ENCODE measurements at regions of chr4 and their contacts with region 1.

Region 1: GRCh38 chr4:10157478-10158332 is 41.1 kb upstream of the WDR1 start:
- DNase-seq: peak; percentile 51
- H3K4me3 Mint-ChIP-seq: no peak overlapping the region
- H3K27ac Mint-ChIP-seq: no peak overlapping the region
- H3K4me1 Mint-ChIP-seq: peaks cover 45% of the 10 kb centered on the region
- H3K27me3 Mint-ChIP-seq: peaks cover 13% of the 10 kb centered on the region

Region 2: GRCh38 chr4:10121568-10122208 is 36.0 kb before region 1 on chr4:
- CTCF ChIA-PET with region 1: interaction called, 14 read pairs
- DNase-seq: no peak
- H3K4me3 Mint-ChIP-seq: no peak overlapping the region
- H3K27ac Mint-ChIP-seq: no peak overlapping the region
- H3K4me1 Mint-ChIP-seq: peaks cover 60% of the 10 kb centered on the region
- H3K27me3 Mint-ChIP-seq: no peaks in the 10 kb centered on the region

Region 3: DNA sequence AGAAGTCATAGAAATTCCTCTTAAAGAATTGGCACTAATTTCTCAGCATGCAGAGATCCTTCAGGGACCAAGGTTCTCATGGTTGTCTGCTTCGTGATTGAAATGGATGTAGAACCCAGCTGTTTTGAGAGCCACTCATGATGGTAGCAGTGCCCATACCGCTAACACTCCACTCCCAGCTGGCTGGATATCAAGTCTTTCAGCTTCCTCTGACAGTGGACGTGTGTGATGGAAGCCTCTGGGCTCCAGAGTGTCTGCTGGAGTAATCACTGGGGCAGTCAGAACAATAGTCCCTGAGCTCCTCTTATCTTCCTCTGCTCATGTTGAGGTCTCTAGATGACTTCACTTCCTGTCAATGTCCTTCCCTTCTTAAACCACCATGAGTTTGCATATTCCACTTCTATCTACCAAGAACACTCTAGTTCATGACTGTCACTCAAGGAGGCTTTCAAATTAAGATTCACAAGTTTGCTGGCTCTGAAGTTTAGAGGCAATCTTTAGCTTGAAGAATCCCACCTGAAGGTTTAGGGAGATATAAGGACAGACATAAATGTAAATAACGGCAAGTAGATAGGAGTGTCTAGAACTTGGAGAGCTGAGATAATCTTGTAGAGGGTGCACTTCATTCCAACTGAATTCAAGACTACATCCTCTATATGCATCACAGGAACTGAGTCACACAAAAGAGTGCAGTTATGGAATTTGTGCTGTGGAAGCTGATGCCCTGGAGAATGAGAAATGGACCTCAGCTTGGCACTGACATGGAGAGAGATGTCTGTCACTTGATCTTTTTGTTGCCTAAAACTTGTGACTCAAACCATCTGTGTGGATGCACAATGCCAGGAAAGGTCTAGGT is 23.4 kb after region 1 on chr4:
- CTCF ChIA-PET with region 1: interaction called, 32 read pairs
- DNase-seq: peak; percentile 46
- H3K4me3 Mint-ChIP-seq: no peak overlapping the region
- H3K27ac Mint-ChIP-seq: peak overlapping the region; percentile 87
- H3K4me1 Mint-ChIP-seq: peaks cover 47% of the 10 kb centered on the region
- H3K27me3 Mint-ChIP-seq: peaks cover 7% of the 10 kb centered on the region

Region 4: DNA sequence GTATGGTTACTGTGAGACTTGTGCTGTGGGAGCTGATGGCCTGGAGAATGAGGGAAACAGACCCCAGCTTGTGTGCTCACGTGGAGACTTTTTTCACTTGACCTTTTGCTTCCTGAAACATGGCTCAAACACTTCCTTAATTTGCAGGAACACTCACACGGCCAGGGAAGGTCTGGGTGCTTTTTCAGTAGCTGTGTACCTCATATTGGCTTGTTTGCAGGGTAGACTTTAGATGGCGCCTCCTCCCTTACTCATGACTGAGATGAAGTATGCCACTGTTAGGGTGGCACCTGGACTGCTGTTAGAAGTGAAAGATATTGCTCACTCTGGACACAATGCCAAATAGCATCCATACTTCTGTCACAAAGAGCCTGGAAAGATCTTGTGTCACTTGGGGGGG is 34.6 kb after region 1 on chr4:
- CTCF ChIA-PET with region 1: interaction called, 17 read pairs
- DNase-seq: no peak
- H3K4me3 Mint-ChIP-seq: no peak overlapping the region
- H3K27ac Mint-ChIP-seq: no peak overlapping the region
- H3K4me1 Mint-ChIP-seq: no peaks in the 10 kb centered on the region
- H3K27me3 Mint-ChIP-seq: peaks cover 3% of the 10 kb centered on the region

Region 5: DNA sequence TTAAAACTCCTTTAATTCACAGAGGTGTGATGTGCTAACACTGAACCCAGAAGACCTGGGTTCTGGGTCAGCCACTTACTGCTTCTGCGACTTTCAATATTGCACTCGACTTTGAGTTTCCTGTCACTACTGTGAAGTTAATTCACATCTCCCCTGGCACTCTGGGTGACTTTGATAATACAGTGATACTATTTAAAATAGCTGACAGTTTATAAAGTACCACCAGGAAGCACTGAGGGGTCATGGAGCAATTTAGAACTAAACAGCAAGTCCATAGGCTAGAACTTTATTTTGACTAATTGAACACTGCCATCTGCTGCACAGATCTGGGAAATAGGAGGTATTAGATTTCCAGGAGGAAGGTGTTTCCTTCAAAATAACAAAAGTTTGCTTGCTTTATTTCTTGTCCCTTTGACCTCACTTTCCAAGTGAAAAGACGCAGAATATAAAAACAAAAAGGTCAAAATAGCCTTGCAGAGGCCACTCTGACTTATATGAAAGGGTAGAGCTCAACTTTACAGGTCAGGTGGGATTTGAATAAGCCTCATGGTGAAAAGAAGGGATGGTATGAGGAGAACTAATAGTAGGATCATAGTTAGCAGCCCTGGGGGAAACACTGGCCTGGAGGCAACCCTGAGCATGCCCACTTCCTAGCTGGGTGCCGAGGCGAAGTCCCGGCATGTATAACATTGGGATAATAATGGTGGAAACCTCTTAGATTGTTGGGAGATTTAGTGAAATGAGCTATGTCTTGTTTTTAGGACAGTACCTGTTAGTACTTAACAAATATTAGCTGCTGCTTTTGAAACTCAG is 246.1 kb after region 1 on chr4:
- CTCF ChIA-PET with region 1: interaction called, 163 read pairs
- DNase-seq: no peak
- H3K4me3 Mint-ChIP-seq: no peak overlapping the region
- H3K27ac Mint-ChIP-seq: no peak overlapping the region
- H3K4me1 Mint-ChIP-seq: no peaks in the 10 kb centered on the region
- H3K27me3 Mint-ChIP-seq: no peaks in the 10 kb centered on the region

Region 6: DNA sequence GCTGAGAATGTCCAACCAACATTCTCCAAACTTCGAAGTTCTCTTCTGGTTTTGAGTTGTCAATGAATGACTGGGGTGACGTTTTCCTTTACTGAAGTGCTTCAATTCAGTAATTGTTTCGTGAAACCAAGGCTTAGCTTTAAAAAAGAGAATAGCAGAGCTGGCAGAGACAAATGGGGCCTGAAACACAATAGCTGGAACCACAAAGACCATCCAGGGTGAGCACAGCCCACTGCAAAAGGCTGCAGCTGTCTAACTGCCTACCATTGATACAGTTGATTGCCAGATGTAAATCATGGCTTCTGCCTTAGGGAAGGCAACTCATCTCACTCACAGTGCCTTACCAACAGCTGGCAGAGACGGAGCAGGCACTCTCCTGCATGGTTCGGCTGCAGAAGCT is 378.2 kb after region 1 on chr4:
- CTCF ChIA-PET with region 1: interaction called, 81 read pairs
- DNase-seq: no peak
- H3K4me3 Mint-ChIP-seq: no peak overlapping the region
- H3K27ac Mint-ChIP-seq: no peak overlapping the region
- H3K4me1 Mint-ChIP-seq: no peaks in the 10 kb centered on the region
- H3K27me3 Mint-ChIP-seq: peaks cover 12% of the 10 kb centered on the region

Region 7: DNA sequence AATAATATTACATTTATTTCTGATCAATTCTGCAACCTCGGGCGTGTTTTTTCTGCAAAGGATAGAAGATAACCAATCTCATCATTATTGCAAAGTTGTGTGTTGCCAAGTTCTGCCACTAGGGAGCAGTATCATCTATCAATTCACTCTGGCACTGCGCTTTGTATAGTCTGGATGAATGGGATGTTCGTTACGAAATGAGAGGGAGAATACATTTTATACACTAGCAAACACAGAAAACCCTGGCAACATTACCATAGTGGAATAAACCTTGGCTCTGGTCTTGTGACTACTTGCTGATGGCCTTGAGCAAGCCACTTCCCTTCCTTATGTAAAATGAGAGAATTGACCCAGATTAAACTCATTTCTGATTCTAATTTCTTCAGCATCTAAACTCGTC is 397.0 kb after region 1 on chr4:
- CTCF ChIA-PET with region 1: interaction called, 85 read pairs
- DNase-seq: peak; percentile 65
- H3K4me3 Mint-ChIP-seq: no peak overlapping the region
- H3K27ac Mint-ChIP-seq: no peak overlapping the region
- H3K4me1 Mint-ChIP-seq: peaks cover 2% of the 10 kb centered on the region
- H3K27me3 Mint-ChIP-seq: peaks cover 9% of the 10 kb centered on the region